Right ventricle myocardium superior (tissue), 1 donor: ENCODE measurements at regions of chr18 and their contacts with region 1.

Region 1: DNA sequence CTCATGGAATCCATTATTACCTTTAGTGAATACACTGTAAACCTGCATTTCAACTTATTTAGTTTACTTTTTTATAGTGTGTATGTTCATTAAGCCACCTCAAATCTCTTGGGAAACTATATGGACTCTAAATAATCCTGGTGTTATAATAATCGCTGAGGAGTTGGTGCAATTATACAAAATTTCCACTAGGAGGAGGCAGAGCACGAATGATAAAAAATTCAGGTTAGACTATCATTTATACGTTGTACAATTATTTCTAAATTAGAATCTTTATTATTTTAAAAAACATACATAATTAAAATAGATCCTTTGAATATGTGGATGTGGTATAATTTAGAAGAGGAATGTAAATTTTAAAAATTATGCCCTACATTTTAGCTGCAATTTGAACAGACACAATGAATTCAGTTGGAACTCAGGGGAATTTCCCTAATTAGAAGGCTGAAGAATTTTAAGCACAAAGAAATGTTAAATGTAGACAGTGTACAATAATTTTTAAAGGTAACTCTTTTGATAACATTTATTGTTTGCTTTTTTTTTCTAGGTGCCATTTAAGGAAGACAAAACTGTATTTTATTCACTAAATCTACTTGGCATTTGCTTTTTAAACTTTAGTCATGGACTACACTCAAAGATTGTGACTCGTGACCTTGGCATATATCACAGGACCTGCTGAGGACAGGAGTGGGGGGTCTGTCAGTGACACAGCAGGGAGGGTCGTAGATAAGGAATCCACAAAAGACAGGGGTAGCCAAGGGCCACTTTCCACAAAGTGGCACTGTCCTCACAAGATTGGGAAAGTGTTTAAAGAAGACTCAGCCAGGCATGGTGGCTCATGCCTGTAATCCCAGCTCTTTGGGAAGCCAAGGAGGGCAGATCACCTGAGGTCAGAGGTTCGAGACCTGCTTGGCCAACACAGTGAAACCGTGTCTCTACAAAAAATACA is 45.5 kb downstream of the RAB12 start:
- DNase-seq: no peak
- ATAC-seq: peak; percentile 48

Region 2: GRCh38 chr18:8969639-8970390 is 315.0 kb after region 1 on chr18:
- intact Hi-C with region 1: no loop called
- DNase-seq: no peak
- ATAC-seq: no peak

Region 3: GRCh38 chr18:8982416-8983184 is 327.8 kb after region 1 on chr18:
- intact Hi-C with region 1: loop called (anchors 5 kb)
- DNase-seq: no peak
- ATAC-seq: peak; percentile 75